Left colon (tissue), 2 donors: ENCODE measurements at regions of chr5 and their contacts with region 1.

Region 1: DNA sequence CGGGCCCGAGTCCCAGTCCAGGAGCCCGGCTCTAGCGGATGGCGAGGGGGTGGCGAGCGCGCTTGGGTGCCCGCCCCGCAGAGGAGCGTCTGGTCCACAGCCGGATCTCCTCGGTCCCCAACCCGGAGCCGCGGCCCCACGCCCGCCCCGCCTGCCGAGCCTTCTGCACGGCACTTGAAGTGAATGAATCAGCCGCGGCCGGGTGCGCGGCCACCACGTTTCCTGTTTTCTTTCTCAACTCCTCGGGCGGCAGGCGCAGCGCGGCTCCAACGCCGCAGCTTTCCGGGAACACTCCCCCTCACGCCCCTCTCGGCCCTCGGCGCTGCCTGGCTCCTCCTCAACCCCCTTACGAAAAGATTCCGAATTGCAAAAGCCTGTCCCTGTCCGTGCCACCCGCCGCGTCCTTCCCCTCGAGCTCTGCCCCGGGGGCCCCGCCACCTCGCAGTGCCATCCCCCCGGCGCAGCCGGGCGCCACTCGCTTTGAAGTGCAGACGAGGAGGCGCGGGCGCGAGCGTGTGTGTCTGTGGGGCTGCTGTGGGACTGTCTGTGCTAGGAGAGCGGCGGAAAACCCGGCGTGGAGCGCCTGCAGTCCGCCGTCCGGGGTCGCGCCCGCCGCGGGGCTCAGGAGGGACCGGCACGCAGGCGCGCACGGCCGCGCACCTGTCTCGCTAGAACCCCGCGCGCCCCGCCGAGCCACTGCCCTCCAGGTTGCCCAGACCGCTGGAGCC is 456.6 kb downstream of the RAB3C start:
- DNase-seq: peak; percentile 65 to 80
- ATAC-seq: peak; percentile 76

Region 2: DNA sequence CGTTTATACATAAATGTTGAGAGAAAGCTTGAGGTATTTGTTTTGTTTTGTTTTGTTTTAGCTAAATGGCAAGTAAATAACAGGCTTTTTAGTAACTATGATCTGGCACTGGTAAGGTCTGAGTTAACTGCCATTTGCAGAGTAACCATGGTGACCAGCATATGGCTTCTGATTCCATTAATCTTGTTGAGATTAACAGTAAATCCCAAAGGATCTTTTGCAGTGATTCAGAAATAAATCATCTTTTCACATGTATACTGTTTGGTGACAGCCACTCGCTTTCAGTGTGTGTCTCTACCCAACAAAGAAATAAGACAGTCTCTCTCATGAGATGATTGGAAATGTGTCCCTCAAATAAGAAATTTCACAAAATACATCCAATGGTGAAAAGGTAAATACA is 221.0 kb before region 1 on chr5:
- intact Hi-C with region 1: no loop called
- DNase-seq: no peak
- ATAC-seq: no peak

Region 3: GRCh38 chr5:59126708-59127573 is 87.5 kb after region 1 on chr5:
- intact Hi-C with region 1: loop called in 1 of 2 experiments (anchors 10 kb)
- DNase-seq: no peak
- ATAC-seq: peak; percentile 21

Region 4: DNA sequence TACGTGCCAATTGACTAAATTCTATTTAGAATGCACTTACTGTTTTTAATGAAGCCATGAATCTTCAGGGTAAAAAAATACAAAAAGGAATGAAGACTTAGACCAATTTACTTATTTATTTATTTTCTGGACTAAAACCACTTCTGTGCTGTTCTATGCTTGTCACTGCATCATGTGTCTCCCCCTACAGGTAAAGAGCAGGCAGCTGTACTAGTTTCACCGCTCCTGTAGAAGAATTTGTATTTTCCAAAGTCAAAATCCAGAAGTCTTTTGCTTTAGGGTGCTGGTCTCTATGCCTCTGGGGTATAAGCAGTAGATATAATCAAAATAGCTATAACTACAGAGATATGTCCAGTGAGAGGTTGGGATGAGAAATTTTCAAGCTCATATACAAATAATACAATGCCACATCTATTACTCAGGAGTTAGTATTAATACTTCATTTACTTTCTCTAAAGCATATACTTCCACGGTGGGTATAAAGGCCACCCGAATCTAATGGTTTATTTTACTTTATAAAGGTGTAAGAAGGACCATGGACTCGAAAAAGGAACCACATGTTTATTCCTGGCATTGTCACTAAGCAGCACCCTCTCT is 134.9 kb after region 1 on chr5:
- intact Hi-C with region 1: loop called in 1 of 2 experiments (anchors 10 kb)
- DNase-seq: no peak
- ATAC-seq: peak; percentile 82